GM12878 (cell line): ENCODE measurements at regions of chr10 and their contacts with region 1.

Region 1: DNA sequence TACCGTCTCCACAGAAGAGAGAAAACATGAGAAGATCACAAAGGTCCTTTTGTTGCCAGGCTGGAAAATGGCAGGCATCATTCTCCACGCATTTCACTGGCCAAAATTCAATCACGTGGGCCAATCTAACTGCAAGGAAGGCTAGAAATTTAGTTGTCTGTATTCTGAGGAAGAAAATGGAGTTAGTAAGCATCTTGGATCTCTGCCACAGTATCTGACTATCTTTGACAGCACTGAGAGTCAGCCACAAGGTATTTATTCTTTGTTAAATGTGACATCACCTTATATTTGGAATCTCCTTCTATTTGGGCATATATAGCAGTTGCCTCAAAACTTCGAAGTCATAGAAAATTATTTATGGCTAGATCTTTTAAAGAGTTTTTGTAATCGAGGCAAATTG is 213.9 kb downstream of the NSUN6 start:
- DNase-seq: no peak
- ATAC-seq: no peak
- H3K4me3 ChIP-seq: no peak overlapping the region
- H3K27ac ChIP-seq: no peak overlapping the region
- H3K4me1 ChIP-seq: no peaks in the 10 kb centered on the region
- H3K27me3 ChIP-seq: no peaks in the 10 kb centered on the region
- CTCF ChIP-seq: no peak
- EP300 ChIP-seq: no peak
- POLR2A ChIP-seq: no peak
- RAD21 ChIP-seq: no peak

Region 2: DNA sequence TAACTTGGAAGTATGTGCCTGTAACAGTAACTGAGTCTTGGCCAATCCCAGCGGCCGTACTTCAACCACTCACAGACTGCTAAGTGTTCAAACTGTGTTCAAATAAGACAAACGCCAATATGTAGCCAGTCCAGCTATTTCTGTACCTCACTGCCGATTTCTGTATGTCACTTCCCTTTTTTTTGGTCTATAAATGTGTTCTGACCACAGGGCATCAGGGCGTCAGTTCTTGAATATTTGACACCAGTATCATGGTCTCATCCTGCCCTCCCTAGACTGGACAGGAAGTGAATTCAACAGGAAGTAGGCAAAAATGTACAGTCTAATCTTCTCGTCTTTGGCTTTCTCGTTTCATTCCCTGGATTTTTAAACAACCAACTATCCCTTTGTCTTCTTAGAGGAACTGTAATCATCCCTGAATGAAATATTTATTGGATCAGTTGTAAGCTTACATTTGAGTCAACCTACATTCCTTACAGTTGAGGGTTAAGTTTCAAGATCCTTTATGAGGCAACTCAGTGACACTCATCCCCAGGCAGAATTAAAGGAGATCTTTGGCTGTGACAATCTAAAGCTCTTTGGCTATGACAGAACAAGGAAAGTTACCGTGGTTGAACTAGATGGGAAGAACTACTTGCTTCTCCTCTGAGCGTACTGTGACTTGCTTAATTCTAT is 18.8 kb before region 1 on chr10:
- CTCF ChIA-PET with region 1: interaction called, 8 read pairs
- POLR2A ChIA-PET with region 1: interaction called, 26 read pairs
- RAD21 ChIA-PET with region 1: interaction called, 11 read pairs
- SMC1A ChIA-PET with region 1: interaction called, 37 read pairs
- in situ Hi-C with region 1: no loop called
- intact Hi-C with region 1: no loop called
- DNase-seq: no peak
- ATAC-seq: peak; percentile 75
- H3K4me3 ChIP-seq: no peak overlapping the region
- H3K27ac ChIP-seq: no peak overlapping the region
- H3K4me1 ChIP-seq: no peaks in the 10 kb centered on the region
- H3K27me3 ChIP-seq: no peaks in the 10 kb centered on the region
- CTCF ChIP-seq: no peak
- EP300 ChIP-seq: peak; percentile 40 to 52; a peak in 2 of 4 replicates
- POLR2A ChIP-seq: no peak
- RAD21 ChIP-seq: no peak

Region 3: GRCh38 chr10:19003341-19003740 is 565.9 kb after region 1 on chr10:
- CTCF ChIA-PET with region 1: no interaction called
- POLR2A ChIA-PET with region 1: no interaction called
- RAD21 ChIA-PET with region 1: no interaction called
- SMC1A ChIA-PET with region 1: no interaction called
- in situ Hi-C with region 1: no loop called
- intact Hi-C with region 1: no loop called
- DNase-seq: no peak
- ATAC-seq: no peak
- H3K4me3 ChIP-seq: no peak overlapping the region
- H3K27ac ChIP-seq: no peak overlapping the region
- H3K4me1 ChIP-seq: no peaks in the 10 kb centered on the region
- H3K27me3 ChIP-seq: no peaks in the 10 kb centered on the region
- CTCF ChIP-seq: no peak
- EP300 ChIP-seq: no peak
- POLR2A ChIP-seq: no peak
- RAD21 ChIP-seq: no peak